ENCODE measurements at regions of chr19 and their contacts with region 1.

Region 1: GRCh38 chr19:15091901-15092753 is 10.1 kb downstream of the OR1I1 start:
- DNase-seq: peak; percentile 38 to 74
- H3K4me3 ChIP-seq: no peak overlapping the region
- H3K27ac ChIP-seq: no peak overlapping the region
- H3K4me1 ChIP-seq: peaks cover 18% of the 10 kb centered on the region
- H3K27me3 ChIP-seq: no peaks in the 10 kb centered on the region
- CTCF ChIP-seq: peak; percentile 88

Region 2: DNA sequence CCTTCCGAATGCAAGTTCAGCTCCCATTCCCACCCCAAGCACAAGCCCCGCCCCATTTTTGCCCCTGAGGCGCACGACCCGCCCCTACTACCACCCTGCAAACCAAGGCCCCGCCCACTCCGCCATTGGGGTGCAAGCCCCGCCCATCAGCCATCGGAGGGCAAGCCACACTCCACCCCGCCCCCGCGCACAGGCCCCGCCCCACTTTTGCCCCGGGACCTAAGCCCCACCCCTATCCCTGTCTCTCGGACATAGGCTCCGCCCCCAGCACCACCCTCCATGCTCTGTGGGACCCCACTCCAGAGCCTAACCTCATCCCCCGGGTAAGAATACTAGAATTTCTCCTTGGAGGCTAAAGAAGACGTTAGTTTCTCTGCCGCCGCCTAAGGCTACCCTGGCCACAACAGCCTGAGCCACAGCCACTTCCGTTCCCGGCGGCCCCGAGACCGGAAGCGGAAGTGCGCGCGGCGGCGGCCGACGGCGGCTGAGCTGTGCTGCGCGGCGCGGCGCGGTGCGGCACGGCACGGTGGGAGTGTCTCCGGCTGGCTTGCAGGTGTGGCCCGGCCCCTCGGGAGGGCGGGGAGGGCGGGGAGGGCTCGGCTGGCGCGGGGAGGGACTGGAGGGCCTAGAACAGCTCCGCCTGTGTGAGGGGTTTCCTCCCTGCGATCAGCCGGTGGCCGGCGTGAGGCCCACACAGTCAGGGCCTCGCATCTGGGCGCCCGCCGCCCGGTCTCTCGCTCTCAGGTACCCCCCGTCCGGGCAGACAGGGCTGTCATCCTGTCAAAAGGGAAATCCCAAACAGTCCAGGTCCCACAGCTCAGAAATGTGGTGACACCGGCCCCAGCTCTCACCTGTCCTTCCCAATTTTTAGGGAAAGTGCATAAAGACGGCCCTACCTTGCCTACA is 402.3 kb before region 1 on chr19 and contains the start of gene ZNF333:
- CTCF ChIA-PET with region 1: interaction called, 12 read pairs
- POLR2A ChIA-PET with region 1: no interaction called
- intact Hi-C with region 1: no loop called
- DNase-seq: peak; percentile 78 to 92
- H3K4me3 ChIP-seq: peak within 1 kb of the TSS; percentile 69
- H3K27ac ChIP-seq: peak within 1 kb of the TSS; percentile 88
- H3K4me1 ChIP-seq: peaks cover 16% of the 10 kb centered on the region
- H3K27me3 ChIP-seq: no peaks in the 10 kb centered on the region
- CTCF ChIP-seq: no peak
- total RNA-seq, gene ZNF333: 10.1 and 10.5 TPM in 2 replicates

Region 3: GRCh38 chr19:15154002-15154612 is 62.0 kb after region 1 on chr19:
- CTCF ChIA-PET with region 1: interaction called, 6 read pairs
- POLR2A ChIA-PET with region 1: no interaction called
- intact Hi-C with region 1: loop called (anchors 1 kb)
- DNase-seq: peak; percentile 64 to 70
- H3K4me3 ChIP-seq: 0 out of 2 replicates have a peak overlapping the region, but pooled peaks have one; percentile 17
- H3K27ac ChIP-seq: no peak overlapping the region
- H3K4me1 ChIP-seq: peaks cover 5% of the 10 kb centered on the region; the same call in 1 of the 2 replicates
- H3K27me3 ChIP-seq: no peaks in the 10 kb centered on the region
- CTCF ChIP-seq: peak; percentile 92

Region 4: GRCh38 chr19:15180451-15181390 is 88.6 kb after region 1 on chr19:
- CTCF ChIA-PET with region 1: no interaction called
- POLR2A ChIA-PET with region 1: no interaction called
- intact Hi-C with region 1: no loop called
- DNase-seq: no peak
- H3K4me3 ChIP-seq: no peak overlapping the region
- H3K27ac ChIP-seq: no peak overlapping the region
- H3K4me1 ChIP-seq: no peaks in the 10 kb centered on the region
- H3K27me3 ChIP-seq: no peaks in the 10 kb centered on the region
- CTCF ChIP-seq: no peak

Region 5: GRCh38 chr19:15234043-15234873 is 142.1 kb after region 1 on chr19:
- CTCF ChIA-PET with region 1: no interaction called
- POLR2A ChIA-PET with region 1: interaction called, 53 read pairs
- intact Hi-C with region 1: no loop called
- DNase-seq: peak; percentile 40 to 100
- H3K4me3 ChIP-seq: peak overlapping the region; percentile 56; the same call in 1 of the 2 replicates
- H3K27ac ChIP-seq: peak overlapping the region; percentile 97
- H3K4me1 ChIP-seq: peaks cover 37% of the 10 kb centered on the region
- H3K27me3 ChIP-seq: no peaks in the 10 kb centered on the region
- CTCF ChIP-seq: no peak

Region 6: DNA sequence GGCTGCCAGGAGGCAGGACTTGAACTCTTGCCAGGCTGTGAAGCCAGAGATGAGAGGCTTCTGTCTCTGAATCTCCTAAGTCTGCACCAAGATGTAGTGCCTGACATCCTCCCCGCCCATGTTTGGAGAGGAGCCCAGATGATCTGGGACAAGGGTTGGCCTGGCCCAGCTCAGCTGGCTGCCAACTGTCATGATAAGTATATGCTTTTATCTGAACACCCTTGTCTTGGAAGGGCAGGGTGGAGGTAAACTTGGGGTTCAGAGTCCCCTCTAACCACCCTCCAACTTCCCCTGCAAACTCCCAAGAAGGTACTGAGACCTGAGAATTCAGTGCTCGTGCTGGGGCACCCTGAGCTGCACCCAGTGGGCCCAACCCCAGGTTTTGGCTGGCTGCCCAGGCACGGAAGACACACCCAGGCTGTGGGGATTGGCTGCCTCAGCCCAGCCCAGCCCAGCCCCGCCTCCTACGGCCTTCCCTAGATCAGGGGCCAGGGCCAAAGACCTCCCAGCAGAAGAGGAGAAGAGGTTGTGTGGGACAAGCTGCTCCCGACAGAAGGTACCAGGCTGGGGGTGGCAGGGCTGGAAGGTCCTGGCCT is 580.6 kb after region 1 on chr19 and contains the start of gene CYP4F12:
- CTCF ChIA-PET with region 1: interaction called, 22 read pairs
- POLR2A ChIA-PET with region 1: no interaction called
- intact Hi-C with region 1: no loop called
- DNase-seq: peak; percentile 82 to 92
- H3K4me3 ChIP-seq: peak within 1 kb of the TSS; percentile 13; the same call in 1 of the 2 replicates
- H3K27ac ChIP-seq: peak within 1 kb of the TSS; percentile 63
- H3K4me1 ChIP-seq: peaks cover 14% of the 10 kb centered on the region
- H3K27me3 ChIP-seq: no peaks in the 10 kb centered on the region
- CTCF ChIP-seq: no peak
- total RNA-seq, gene CYP4F12: 5.7 and 8.1 TPM in 2 replicates